ENCODE measurements at regions of chr7 and their contacts with region 1.

Region 1: GRCh38 chr7:101650579-101651081 is 21.5 kb upstream of the MYL10 start:
- DNase-seq: no peak
- H3K4me3 ChIP-seq: no peak overlapping the region
- H3K27ac ChIP-seq: no peak overlapping the region
- H3K4me1 ChIP-seq: no peaks in the 10 kb centered on the region
- H3K27me3 ChIP-seq: no peaks in the 10 kb centered on the region
- CTCF ChIP-seq: no peak
- EP300 ChIP-seq: no peak
- POLR2A ChIP-seq: no peak

Region 2: GRCh38 chr7:101564778-101565211 is 85.8 kb before region 1 on chr7:
- intact Hi-C with region 1: loop called in 1 of 4 experiments (anchors 10 kb)
- DNase-seq: no peak
- H3K4me3 ChIP-seq: no peak overlapping the region
- H3K27ac ChIP-seq: no peak overlapping the region
- H3K4me1 ChIP-seq: no peaks in the 10 kb centered on the region
- H3K27me3 ChIP-seq: no peaks in the 10 kb centered on the region
- CTCF ChIP-seq: no peak
- EP300 ChIP-seq: no peak
- POLR2A ChIP-seq: no peak

Region 3: DNA sequence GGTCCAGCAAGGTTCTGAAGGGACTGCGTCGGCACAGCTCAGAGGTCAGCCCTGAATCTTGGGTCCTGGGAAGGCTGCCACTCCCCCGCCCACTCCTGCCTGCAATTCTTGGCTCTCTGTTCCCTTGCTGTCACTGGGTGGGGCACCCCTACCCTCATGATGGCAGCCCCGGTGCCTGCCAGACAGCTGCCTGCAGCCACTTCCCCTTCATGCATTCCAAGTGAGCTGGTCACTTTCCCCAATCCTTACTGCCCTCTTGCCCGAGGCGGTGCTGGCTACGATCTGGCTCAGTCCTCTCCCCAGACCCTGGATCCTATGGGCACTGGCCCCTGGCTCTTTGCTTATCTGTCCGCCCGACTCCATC is 35.7 kb before region 1 on chr7:
- intact Hi-C with region 1: loop called in 1 of 4 experiments (anchors 1 kb)
- DNase-seq: no peak
- H3K4me3 ChIP-seq: no peak overlapping the region
- H3K27ac ChIP-seq: no peak overlapping the region
- H3K4me1 ChIP-seq: no peaks in the 10 kb centered on the region
- H3K27me3 ChIP-seq: no peaks in the 10 kb centered on the region
- CTCF ChIP-seq: no peak
- EP300 ChIP-seq: no peak
- POLR2A ChIP-seq: no peak

Region 4: DNA sequence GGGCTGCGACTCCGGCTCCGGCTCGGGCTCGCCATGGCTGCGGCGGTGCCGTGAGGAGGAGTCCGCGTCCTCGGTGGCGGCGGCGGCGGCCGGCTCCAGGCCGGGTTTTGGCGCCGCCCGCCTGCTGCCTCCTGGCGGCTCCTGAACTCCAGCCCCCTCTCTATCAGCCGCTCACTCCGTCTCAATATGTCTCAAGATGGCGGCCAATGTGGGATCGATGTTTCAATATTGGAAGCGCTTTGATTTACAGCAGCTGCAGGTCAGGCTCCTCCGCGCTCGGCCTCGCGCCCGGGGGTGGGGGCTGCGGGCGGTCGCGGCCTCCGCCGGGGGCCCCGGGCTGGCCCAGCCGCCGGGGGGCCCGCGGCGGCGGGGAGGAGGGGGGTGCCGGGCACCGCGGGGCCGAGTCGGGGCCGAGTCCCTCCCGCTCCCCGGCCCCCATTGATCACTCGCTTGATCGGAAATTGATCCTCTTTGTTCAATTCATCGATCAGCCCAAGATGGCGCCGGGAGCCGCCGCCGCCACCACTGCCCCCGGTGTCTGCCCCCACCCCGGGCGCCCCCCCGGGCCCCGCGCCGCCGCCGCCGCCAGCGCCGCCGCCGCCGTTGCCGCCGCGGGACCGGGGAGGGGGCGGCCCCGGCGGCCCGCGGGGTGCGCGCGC is 165.3 kb after region 1 on chr7:
- intact Hi-C with region 1: no loop called
- DNase-seq: peak; percentile 68 to 82 (median 73)
- H3K4me3 ChIP-seq: peak overlapping the region; percentile 47
- H3K27ac ChIP-seq: peak overlapping the region; percentile 72 to 76
- H3K4me1 ChIP-seq: peaks cover 3% of the 10 kb centered on the region
- H3K27me3 ChIP-seq: no peaks in the 10 kb centered on the region
- CTCF ChIP-seq: no peak
- EP300 ChIP-seq: no peak
- POLR2A ChIP-seq: peak; percentile 26

Region 5: DNA sequence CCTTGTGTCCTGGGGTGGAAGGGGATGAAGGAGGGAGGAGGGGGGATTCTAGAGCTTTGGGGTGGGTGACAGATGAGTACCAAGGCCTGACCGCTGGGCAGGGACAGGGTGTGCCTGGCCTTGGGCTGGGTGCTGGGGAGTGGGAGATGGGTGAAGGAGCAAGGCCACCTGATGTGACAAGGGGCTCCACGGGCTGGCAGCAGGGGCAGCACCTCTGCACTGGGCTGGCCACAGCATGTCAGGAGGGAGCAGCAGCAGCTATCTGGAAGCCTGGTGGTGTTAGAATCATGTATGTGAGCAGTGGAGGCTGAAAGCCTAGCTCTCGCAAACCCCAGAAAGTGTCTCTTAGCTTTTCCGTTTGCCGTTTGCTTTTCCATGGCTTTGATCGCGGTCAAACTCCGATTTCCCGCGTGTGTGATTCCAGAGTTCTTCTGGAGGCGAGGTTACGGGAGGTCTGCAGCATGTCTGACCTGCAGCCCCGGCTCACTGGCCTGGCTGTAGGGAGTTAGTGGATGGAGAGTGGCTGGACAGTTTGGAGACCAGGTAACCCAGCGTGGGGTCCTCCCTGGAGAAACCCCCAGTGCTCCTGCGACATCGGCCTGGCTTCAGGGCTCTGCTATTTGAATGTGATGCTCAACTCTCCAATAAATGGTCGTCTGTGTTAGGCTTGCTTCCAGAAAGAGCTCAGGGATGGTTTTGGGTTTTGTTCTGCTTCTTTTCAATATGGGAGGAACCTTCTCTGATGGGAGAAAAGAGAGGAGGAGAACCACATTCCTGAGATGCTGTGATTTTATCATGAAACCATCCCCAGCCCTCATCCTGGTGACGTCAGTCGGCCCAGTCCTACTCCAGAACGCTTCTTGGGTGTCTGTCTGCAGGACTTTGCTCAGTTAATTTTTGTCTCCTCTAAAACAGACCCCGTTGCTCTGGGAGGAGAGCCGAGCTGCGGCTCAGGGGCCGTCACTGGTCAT is 272.3 kb after region 1 on chr7:
- intact Hi-C with region 1: no loop called
- DNase-seq: peak in 2 of 5 donors; percentile 21 to 29
- H3K4me3 ChIP-seq: no peak overlapping the region
- H3K27ac ChIP-seq: no peak overlapping the region
- H3K4me1 ChIP-seq: peaks cover 5% of the 10 kb centered on the region
- H3K27me3 ChIP-seq: no peaks in the 10 kb centered on the region
- CTCF ChIP-seq: no peak
- EP300 ChIP-seq: no peak
- POLR2A ChIP-seq: no peak